HepG2 (cell line): ENCODE measurements at regions of chr4 and their contacts with region 1.

Region 1: DNA sequence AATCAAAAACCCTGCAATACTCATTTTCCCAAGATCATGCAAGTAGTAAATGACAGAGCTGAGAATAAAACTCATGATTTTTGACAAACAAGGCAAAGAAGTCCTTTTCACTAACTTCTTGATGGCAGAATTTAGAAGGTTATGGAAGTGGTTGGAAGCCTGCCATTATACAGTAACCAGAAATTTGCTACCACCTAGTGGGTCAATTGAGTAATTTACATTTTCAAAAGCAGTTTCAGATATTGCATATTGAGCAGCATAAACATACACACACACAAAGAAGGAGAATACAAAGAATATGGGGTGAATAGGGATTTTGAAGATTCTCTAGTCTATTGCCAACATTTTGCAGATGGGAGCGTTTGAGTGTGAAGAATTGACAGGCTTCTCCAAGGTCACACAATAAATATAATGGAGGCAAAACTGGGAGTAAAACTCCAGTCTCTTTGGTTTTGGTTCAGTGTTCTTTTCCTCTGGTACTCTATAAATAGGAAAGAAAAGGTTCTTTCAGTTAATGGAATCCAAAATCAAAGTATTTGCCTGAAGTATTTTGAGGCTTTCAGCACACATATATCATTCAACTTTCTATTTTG is 70.2 kb downstream of the GC start:
- DNase-seq: peak; percentile 20
- ATAC-seq: peak; percentile 58; the same call in 2 of the 3 replicates
- H3K4me3 ChIP-seq: no peak overlapping the region
- H3K27ac ChIP-seq: no peak overlapping the region
- H3K4me1 ChIP-seq: no peaks in the 10 kb centered on the region
- H3K27me3 ChIP-seq: no peaks in the 10 kb centered on the region
- CTCF ChIP-seq: peak; percentile 62
- EP300 ChIP-seq: no peak
- POLR2A ChIP-seq: no peak
- RAD21 ChIP-seq: no peak

Region 2: DNA sequence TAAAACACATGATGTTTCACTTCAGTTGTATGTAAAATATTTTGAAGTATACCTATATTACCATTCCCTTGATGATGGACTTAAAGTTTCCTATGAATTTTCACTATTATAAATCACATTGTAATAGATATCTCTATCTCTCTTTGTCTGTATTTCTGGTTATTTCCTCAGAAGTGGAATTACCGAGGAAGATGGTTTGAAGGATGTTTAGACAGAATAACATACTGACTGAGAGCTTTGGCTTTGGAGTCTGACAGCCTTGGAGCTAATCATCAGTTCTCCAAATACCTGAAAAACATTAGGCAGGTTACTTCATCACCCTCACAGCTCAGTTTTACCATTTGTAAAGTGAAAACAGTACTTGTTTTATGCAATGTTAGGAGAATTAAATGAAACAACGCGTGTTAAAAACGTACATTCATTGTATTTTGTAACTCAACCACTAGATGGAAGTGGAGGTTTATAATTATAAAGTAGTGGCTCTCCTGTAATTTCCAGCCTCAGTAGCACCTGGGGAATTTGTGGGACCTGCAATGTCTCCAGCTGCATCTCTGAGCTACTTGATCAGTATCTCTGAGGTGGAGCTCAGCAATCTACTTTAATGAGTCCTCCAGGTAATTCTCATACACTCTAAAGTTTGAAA is 1061.7 kb before region 1 on chr4:
- CTCF ChIA-PET with region 1: interaction called, 3 read pairs
- POLR2A ChIA-PET with region 1: no interaction called
- in situ Hi-C with region 1: loop called (anchors 25 kb)
- intact Hi-C with region 1: no loop called
- DNase-seq: peak; percentile 27
- ATAC-seq: peak; percentile 79
- H3K4me3 ChIP-seq: no peak overlapping the region; a peak in 1 of 6 replicates
- H3K27ac ChIP-seq: no peak overlapping the region
- H3K4me1 ChIP-seq: peaks cover 7% of the 10 kb centered on the region; the same call in 1 of the 2 replicates
- H3K27me3 ChIP-seq: peaks cover 0 to 3% of the 10 kb centered on the region in 2 experiments; a peak in 1 of 5 replicates
- CTCF ChIP-seq: peak; percentile 70
- EP300 ChIP-seq: no peak
- POLR2A ChIP-seq: no peak
- RAD21 ChIP-seq: peak; percentile 58

Region 3: DNA sequence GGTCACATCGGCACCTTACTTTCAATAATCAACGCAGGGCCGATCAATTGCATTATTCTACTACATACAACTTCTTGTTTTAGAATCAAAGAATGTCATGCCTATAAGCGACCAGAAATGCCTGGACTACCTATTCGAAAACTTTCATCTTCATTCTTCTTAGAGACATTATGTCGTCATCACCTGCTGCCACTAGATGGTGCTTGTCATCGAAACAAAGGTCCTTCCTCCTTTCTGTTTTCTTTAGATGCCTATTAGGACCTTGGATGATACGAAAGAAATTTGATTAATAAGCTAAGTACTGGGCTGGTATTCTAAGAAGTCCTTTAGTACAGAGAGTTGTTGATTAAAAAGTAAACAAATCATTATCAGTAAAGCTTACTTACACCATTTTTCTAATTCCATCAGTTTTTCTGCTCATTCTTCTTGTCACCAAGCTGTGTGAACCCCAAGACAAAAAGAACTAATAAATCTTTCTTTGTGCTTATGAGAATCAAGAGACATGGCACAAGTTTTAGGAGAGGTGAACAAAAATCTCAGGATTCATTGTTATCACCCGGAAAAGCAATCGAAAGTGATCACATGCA is 529.4 kb before region 1 on chr4:
- CTCF ChIA-PET with region 1: interaction called, 8 read pairs
- POLR2A ChIA-PET with region 1: no interaction called
- in situ Hi-C with region 1: no loop called
- intact Hi-C with region 1: loop called (anchors 1 kb)
- DNase-seq: peak; percentile 31
- ATAC-seq: no peak; the same call in 2 of the 3 replicates
- H3K4me3 ChIP-seq: no peak overlapping the region
- H3K27ac ChIP-seq: no peak overlapping the region
- H3K4me1 ChIP-seq: peaks cover 15% of the 10 kb centered on the region
- H3K27me3 ChIP-seq: peaks cover 1 to 34% of the 10 kb centered on the region in 2 experiments; a peak in 3 of 5 replicates
- CTCF ChIP-seq: peak; percentile 67
- EP300 ChIP-seq: no peak
- POLR2A ChIP-seq: no peak
- RAD21 ChIP-seq: no peak

Region 4: DNA sequence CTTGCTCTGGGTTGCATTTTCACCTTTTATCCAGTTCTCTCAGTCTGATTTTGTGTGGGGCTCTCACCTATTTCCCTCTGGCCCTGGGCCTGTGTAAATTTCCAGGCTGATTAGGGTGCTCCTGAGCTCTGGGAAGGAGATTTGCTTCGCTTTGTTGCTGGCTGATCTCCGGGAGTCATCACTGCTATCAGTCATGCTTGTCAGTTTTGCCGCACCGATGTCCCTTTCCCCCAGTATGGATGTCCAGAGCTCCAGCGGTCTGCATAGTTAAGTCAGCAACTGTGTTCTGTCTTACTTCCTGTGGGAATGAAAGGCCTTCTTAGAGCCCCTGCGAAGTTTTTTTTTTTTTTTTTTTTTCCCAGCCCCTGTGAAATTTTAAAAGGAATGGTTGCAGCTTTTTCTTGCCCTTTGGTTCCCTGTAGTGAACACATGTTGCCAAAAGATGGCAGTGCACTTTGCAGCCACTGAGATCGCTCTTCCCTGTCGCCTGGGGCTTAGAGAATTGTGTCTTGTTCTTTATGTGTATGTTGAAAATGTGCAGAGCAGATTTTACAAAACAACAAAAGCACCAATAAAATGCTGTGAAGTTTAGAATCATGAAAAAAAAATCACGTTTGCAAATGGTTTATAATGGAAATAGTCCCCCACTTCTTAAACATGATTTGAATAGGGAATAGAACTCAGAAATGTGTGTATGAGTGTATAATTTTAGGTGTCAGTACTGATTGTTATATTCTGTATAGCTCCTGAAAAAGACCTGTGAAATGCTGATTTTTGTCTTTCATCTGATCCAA is 484.0 kb before region 1 on chr4:
- CTCF ChIA-PET with region 1: interaction called, 5 read pairs
- POLR2A ChIA-PET with region 1: no interaction called
- in situ Hi-C with region 1: loop called (anchors 10 kb)
- intact Hi-C with region 1: loop called (anchors 1 kb)
- DNase-seq: peak; percentile 5
- ATAC-seq: peak; percentile 83
- H3K4me3 ChIP-seq: no peak overlapping the region
- H3K27ac ChIP-seq: no peak overlapping the region
- H3K4me1 ChIP-seq: no peaks in the 10 kb centered on the region
- H3K27me3 ChIP-seq: peaks cover 0 to 11% of the 10 kb centered on the region in 2 experiments; a peak in 4 of 5 replicates
- CTCF ChIP-seq: peak; percentile 62
- EP300 ChIP-seq: no peak
- POLR2A ChIP-seq: no peak
- RAD21 ChIP-seq: no peak

Region 5: GRCh38 chr4:71270901-71271300 is 442.8 kb before region 1 on chr4:
- CTCF ChIA-PET with region 1: interaction called, 4 read pairs
- POLR2A ChIA-PET with region 1: no interaction called
- in situ Hi-C with region 1: no loop called
- intact Hi-C with region 1: loop called (anchors 1 kb)
- DNase-seq: peak; percentile 29
- ATAC-seq: peak; percentile 86
- H3K4me3 ChIP-seq: no peak overlapping the region
- H3K27ac ChIP-seq: no peak overlapping the region
- H3K4me1 ChIP-seq: no peaks in the 10 kb centered on the region
- H3K27me3 ChIP-seq: no peaks in the 10 kb centered on the region
- CTCF ChIP-seq: peak; percentile 58
- EP300 ChIP-seq: no peak
- POLR2A ChIP-seq: no peak
- RAD21 ChIP-seq: no peak

Region 6: DNA sequence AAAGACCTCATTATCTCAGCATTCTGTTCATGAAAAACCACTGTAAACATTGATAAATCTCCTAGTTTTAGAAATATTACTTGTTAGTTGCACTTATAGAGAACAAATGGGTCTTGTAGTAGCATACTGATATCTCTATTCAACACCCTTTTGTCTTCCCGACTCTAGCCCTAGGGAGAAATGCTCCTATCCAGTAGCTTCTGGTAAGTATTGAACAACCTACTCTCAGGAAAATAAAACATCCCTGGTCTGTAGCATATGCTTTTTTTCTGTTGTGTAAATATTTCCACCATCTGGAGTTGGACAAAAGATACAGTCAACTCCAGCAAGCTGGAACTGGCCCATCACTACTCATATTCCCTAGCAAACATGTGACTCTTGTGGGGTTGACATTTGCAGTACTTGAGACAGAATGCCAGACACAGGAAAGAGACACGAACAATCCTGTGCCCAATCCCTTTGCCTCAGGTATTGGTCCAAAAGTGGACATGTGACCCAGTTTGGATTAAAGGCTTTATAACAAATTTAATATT is 118.1 kb before region 1 on chr4:
- CTCF ChIA-PET with region 1: no interaction called
- POLR2A ChIA-PET with region 1: no interaction called
- in situ Hi-C with region 1: no loop called
- intact Hi-C with region 1: no loop called
- DNase-seq: no peak
- ATAC-seq: no peak
- H3K4me3 ChIP-seq: no peak overlapping the region
- H3K27ac ChIP-seq: no peak overlapping the region
- H3K4me1 ChIP-seq: no peaks in the 10 kb centered on the region
- H3K27me3 ChIP-seq: no peaks in the 10 kb centered on the region; a peak in 1 of 5 replicates
- CTCF ChIP-seq: no peak
- EP300 ChIP-seq: no peak
- POLR2A ChIP-seq: no peak
- RAD21 ChIP-seq: no peak

Region 7: GRCh38 chr4:71732706-71733105 is 19.0 kb after region 1 on chr4:
- CTCF ChIA-PET with region 1: no interaction called
- POLR2A ChIA-PET with region 1: no interaction called
- in situ Hi-C with region 1: no loop called
- intact Hi-C with region 1: no loop called
- DNase-seq: peak; percentile 13
- ATAC-seq: no peak
- H3K4me3 ChIP-seq: no peak overlapping the region
- H3K27ac ChIP-seq: no peak overlapping the region
- H3K4me1 ChIP-seq: no peaks in the 10 kb centered on the region
- H3K27me3 ChIP-seq: no peaks in the 10 kb centered on the region
- CTCF ChIP-seq: peak; percentile 46
- EP300 ChIP-seq: no peak
- POLR2A ChIP-seq: no peak
- RAD21 ChIP-seq: no peak

Region 8: DNA sequence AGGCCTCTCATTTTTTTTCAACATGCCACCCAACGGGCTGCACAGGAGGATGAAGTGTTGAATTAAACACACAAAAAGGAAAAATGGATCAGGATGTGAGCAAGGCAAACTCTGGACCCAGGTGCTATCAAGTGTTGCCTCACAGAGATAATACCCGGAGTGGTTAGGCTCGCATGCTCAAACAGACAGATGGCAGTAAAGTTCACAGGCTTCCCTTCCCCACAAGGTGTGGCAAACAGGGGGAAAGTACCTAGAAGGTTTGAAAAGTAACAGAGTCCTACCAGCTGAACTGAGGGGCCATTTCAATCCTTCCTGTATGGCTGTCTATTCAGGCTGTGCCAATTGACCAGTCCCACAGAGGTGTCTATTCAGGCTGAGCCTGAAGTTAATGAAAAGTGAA is 194.1 kb after region 1 on chr4:
- CTCF ChIA-PET with region 1: no interaction called
- POLR2A ChIA-PET with region 1: no interaction called
- in situ Hi-C with region 1: no loop called
- intact Hi-C with region 1: no loop called
- DNase-seq: no peak
- ATAC-seq: no peak
- H3K4me3 ChIP-seq: no peak overlapping the region
- H3K27ac ChIP-seq: no peak overlapping the region
- H3K4me1 ChIP-seq: no peaks in the 10 kb centered on the region
- H3K27me3 ChIP-seq: no peaks in the 10 kb centered on the region; a peak in 1 of 5 replicates
- CTCF ChIP-seq: no peak
- EP300 ChIP-seq: no peak
- POLR2A ChIP-seq: no peak
- RAD21 ChIP-seq: no peak

Region 9: DNA sequence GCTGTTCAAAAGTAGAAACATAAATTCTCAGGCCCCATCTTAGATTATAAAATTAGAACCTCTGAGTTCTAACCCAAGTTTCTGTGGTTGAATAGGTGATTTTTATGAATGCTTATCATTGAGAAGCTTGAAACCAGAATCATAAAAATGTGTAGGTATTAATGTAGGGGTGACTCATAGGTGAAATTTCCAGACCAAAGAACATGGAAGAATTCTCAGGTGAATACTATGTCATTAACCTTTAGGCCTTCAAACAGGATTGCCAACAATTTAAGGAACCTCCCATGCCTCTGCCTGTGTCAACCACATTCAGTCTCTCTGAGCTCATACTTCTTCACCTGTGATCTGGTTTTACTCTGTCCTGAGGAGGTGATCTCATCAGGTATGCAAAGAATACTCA is 495.9 kb after region 1 on chr4:
- CTCF ChIA-PET with region 1: no interaction called
- POLR2A ChIA-PET with region 1: no interaction called
- in situ Hi-C with region 1: no loop called
- intact Hi-C with region 1: no loop called
- DNase-seq: no peak
- ATAC-seq: no peak
- H3K4me3 ChIP-seq: no peak overlapping the region
- H3K27ac ChIP-seq: no peak overlapping the region
- H3K4me1 ChIP-seq: no peaks in the 10 kb centered on the region
- H3K27me3 ChIP-seq: no peaks in the 10 kb centered on the region
- CTCF ChIP-seq: no peak
- EP300 ChIP-seq: no peak
- POLR2A ChIP-seq: no peak
- RAD21 ChIP-seq: no peak